Cardiac septum (tissue), 1 donor: ENCODE measurements at regions of chr5 and their contacts with region 1.

Region 1: GRCh38 chr5:95646554-95647431 is at the start of gene RFESD:
- DNase-seq: peak; percentile 98
- total RNA-seq, gene RFESD: 2.7 TPM

Region 2: GRCh38 chr5:95554647-95555548 is 91.9 kb before region 1 on chr5 and contains the starts of genes ARSK and SKIC3:
- intact Hi-C with region 1: loop called (anchors 10 kb)
- DNase-seq: peak; percentile 96
- total RNA-seq, gene ARSK: 2.2 TPM
- total RNA-seq, gene SKIC3: 70.7 TPM

Region 3: DNA sequence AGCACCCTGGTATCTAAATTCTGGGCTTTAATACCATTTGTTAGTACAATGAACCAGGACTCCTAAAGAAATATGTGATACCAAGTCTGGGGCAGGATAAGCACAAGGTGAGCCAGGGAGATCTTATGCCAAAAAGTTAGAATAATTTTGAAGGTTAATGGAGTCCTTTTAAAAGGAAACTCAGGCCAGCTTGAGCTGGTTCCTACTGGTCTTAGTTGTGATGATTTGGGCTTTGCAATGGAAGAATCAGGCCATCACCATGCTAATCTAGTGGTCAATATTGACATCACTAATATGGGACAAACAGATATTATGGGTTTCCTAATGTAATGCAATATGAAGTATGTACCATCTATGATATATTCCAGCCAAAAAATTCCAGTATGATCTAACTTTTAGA is 43.5 kb after region 1 on chr5:
- intact Hi-C with region 1: no loop called
- DNase-seq: no peak

Region 4: DNA sequence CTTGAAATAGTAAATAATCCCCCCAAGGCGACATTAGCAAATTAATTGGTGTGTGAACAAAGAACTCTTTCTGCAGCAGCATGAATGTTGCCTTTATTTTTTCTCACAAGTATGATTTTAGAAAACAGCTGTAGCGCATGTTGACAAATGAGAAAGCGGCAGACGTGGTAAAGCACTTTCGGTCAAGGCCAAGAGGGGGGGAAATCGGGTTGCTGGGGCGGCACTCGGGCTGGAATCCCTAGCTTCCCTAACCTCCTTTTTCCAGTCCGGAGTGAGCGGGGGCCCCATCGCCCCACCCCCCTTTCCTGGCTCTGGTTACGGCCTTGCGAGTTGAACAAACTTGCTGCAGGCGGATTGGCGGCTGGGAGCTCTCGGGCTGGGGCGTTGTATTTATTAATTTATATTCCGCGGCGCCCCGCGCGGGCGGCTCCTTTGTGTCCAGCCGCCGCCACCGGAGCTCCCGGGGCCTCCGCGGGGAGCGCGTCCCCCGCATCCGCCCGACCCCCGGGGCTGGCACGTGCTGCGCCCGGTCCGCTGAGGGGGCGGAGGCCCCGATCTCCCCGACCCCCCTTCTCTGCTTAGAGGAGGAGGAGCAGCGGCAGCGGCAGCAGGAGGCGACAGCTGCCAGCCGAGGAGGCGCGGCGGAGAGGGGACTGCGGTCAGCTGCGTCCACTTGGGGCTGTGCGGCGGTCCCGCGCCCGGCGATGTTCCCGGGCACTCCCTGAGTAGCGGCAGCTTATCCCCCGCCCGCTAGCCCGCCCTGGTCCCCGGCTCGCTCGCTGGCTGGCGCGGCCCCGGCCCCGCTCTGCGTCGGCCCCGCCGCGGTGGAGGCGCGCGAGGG is 84.2 kb after region 1 on chr5 and contains the start of gene RHOBTB3:
- intact Hi-C with region 1: loop called (anchors 5 kb)
- DNase-seq: peak; percentile 93
- total RNA-seq, gene RHOBTB3: 79.0 TPM

Region 5: GRCh38 chr5:95781101-95781583 is 134.3 kb after region 1 on chr5:
- intact Hi-C with region 1: loop called (anchors 5 kb)
- DNase-seq: peak; percentile 91

Region 6: GRCh38 chr5:95846554-95847260 is 199.9 kb after region 1 on chr5:
- intact Hi-C with region 1: loop called (anchors 2 kb)
- DNase-seq: no peak

Region 7: DNA sequence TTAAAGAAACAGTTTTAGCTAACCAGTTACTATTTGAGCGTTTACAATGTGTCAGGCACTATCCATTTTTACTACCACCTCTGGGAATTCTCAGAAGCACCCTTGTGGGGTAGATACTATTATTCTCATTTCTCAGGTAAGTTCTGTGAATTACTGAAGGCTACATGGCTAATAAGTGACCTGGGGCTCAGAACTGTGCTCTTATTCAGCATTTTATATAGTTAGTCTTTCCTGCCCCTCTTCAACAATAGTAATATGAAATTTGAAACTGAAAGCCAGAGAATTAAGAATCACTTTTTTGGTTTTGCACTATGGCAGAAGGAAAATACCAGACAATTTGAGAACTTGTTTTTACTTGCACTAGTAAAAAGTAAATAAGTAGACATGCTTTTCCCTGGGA is 303.0 kb after region 1 on chr5:
- intact Hi-C with region 1: no loop called
- DNase-seq: no peak

Region 8: DNA sequence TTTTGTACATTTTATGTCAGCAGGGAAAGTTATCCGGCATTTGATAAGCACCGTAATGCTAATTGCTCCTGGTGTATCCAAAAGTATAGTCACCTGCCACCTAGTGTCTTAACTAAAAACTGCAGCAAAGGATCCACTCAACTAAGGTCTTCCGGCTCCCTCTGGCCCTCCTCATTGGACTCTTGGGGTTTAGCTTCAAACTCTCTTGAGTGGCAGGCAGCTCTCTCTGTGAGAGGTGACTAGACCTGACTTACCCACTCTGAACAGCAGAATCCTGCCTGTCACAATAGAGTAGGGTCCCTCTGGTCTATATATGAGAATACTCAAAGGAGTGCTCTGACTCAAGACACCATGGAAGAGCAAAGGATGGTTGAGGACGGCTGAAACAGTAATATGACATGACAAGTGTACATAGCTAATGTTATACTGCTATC is 955.0 kb after region 1 on chr5:
- intact Hi-C with region 1: loop called (anchors 10 kb)
- DNase-seq: no peak

Region 9: GRCh38 chr5:96680759-96681470 is 1034.1 kb after region 1 on chr5:
- intact Hi-C with region 1: no loop called
- DNase-seq: no peak